ENCODE measurements at regions of chr19 and their contacts with region 1.

Region 1: DNA sequence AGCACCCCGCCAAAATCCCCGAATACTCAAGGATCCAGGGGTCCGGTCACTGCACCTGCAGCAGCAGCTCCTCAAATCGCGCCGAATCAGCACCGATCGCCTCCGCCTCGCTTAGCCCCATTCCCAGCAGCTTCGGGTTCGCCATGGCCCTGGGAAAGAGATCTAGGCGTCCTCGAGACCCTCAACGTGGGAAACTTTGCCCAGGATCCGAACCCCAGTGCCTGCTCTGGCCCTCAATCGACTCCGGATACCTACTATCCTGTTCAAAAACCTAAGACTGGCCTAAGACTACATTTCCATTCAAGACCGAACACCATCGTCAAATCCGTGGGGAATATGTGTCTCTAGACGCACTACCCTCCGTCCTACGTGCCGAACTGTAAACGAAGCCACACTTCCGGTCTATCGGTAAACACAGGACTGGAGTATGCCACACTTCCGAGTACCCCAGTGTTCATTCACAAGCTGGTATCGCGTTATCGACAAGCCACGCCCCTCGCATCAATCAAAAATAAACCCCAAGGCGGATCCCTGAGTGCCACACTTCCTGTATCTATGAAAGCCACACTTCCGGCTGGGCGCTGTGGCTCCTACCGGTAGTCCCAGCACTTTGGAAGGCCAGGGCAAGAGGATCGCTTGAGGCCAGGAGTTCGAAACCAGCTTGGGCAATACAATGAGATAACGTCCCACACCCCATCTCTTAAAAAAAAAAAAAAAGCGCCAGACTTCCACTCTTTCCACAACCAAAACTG is at the start of gene PIH1D1:
- DNase-seq: peak; percentile 98 to 99
- H3K4me3 ChIP-seq: peak within 1 kb of the TSS; percentile 73
- H3K4me3 Mint-ChIP-seq: peak within 1 kb of the TSS; percentile 98
- H3K27ac Mint-ChIP-seq: peak within 1 kb of the TSS; percentile 100
- H3K4me1 ChIP-seq: peaks cover 6% of the 10 kb centered on the region; the same call in 1 of the 2 replicates
- H3K4me1 Mint-ChIP-seq: peaks cover 10% of the 10 kb centered on the region
- H3K27me3 ChIP-seq: no peaks in the 10 kb centered on the region
- H3K27me3 Mint-ChIP-seq: no peaks in the 10 kb centered on the region
- CTCF ChIP-seq: no peak
- total RNA-seq, gene PIH1D1: 150 and 167 TPM in 2 replicates

Region 2: DNA sequence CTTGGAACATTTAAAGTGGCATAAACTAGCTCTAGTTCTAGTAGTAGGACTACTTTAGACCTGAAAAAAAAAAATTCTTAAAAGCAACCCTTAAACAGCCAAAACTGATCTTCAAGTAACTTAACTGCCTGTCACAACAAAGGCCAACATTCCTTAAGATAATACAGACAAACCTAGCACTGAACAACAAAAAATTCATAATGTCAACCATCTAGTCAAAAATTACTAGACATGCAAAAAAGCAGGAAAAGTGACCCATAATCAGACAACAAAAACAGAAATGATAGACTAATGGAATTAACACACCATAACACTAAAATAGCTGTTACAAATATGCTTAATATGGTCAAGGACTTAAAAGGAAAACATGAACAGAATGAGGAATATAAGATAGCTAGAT is 133.3 kb before region 1 on chr19:
- CTCF ChIA-PET with region 1: no interaction called
- POLR2A ChIA-PET with region 1: interaction called, 10 read pairs
- intact Hi-C with region 1: no loop called
- DNase-seq: no peak
- H3K4me3 ChIP-seq: no peak overlapping the region
- H3K4me3 Mint-ChIP-seq: no peak overlapping the region
- H3K27ac Mint-ChIP-seq: no peak overlapping the region
- H3K4me1 ChIP-seq: no peaks in the 10 kb centered on the region
- H3K4me1 Mint-ChIP-seq: no peaks in the 10 kb centered on the region
- H3K27me3 ChIP-seq: no peaks in the 10 kb centered on the region
- H3K27me3 Mint-ChIP-seq: peaks cover 7% of the 10 kb centered on the region
- CTCF ChIP-seq: no peak

Region 3: DNA sequence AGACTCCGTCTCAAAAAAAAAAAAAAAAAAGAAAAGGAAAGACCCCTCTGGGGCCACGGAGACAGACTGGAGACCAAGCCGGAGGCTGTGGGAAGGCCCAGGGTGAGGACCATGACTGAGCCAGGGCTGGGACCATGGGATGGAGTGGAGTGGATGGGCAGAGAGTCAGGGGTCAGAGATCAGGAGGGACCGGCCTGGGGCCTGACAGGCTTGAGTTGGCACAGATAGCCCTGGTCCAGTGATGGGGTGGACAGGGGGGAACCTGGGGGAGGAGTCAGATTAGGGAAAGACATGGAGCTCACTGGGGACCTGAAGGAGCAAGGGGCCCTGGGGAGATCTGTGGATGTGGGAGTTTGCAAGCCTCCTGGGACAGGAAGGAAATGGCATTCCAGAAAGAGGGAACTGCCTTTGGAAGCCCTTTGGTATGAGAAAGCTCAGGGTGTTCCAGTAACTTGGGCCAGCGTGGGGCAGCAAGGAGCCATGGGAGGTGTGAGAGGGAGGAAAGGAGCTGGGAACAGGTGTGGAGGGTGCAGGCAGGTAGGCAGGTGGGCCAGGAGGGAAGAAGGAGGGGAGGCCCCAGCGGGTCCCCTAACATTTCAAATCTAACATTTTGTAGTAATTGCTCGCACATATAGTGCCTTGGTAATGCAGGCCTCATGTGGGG is 29.5 kb after region 1 on chr19:
- CTCF ChIA-PET with region 1: interaction called, 7 read pairs
- POLR2A ChIA-PET with region 1: interaction called, 13 read pairs
- intact Hi-C with region 1: no loop called
- DNase-seq: peak in 1 of 2 experiments; percentile 44
- H3K4me3 ChIP-seq: no peak overlapping the region
- H3K4me3 Mint-ChIP-seq: no peak overlapping the region
- H3K27ac Mint-ChIP-seq: no peak overlapping the region
- H3K4me1 ChIP-seq: no peaks in the 10 kb centered on the region; the same call in 1 of the 2 replicates
- H3K4me1 Mint-ChIP-seq: peaks cover 5% of the 10 kb centered on the region
- H3K27me3 ChIP-seq: no peaks in the 10 kb centered on the region
- H3K27me3 Mint-ChIP-seq: no peaks in the 10 kb centered on the region
- CTCF ChIP-seq: no peak

Region 4: GRCh38 chr19:49487277-49488045 is 35.9 kb after region 1 on chr19 and contains the start of gene RPL13A:
- CTCF ChIA-PET with region 1: interaction called, 6 read pairs
- POLR2A ChIA-PET with region 1: interaction called, 3 read pairs
- intact Hi-C with region 1: loop called (anchors 1 kb)
- DNase-seq: peak; percentile 99 to 100
- H3K4me3 ChIP-seq: peak within 1 kb of the TSS; percentile 88
- H3K4me3 Mint-ChIP-seq: peak within 1 kb of the TSS; percentile 97
- H3K27ac Mint-ChIP-seq: peak within 1 kb of the TSS; percentile 99
- H3K4me1 ChIP-seq: peaks cover 13% of the 10 kb centered on the region; the same call in 1 of the 2 replicates
- H3K4me1 Mint-ChIP-seq: no peaks in the 10 kb centered on the region
- H3K27me3 ChIP-seq: no peaks in the 10 kb centered on the region
- H3K27me3 Mint-ChIP-seq: no peaks in the 10 kb centered on the region
- CTCF ChIP-seq: no peak
- total RNA-seq, gene RPL13A: 2,726 and 2,880 TPM in 2 replicates

Region 5: GRCh38 chr19:49497047-49497788 is 45.6 kb after region 1 on chr19:
- CTCF ChIA-PET with region 1: no interaction called
- POLR2A ChIA-PET with region 1: interaction called, 14 read pairs
- intact Hi-C with region 1: loop called (anchors 1 kb)
- DNase-seq: peak in 1 of 2 experiments; percentile 62
- H3K4me3 ChIP-seq: peak overlapping the region; percentile 93
- H3K4me3 Mint-ChIP-seq: peak overlapping the region; percentile 98
- H3K27ac Mint-ChIP-seq: peak overlapping the region; percentile 99
- H3K4me1 ChIP-seq: peaks cover 20% of the 10 kb centered on the region
- H3K4me1 Mint-ChIP-seq: peaks cover 13% of the 10 kb centered on the region
- H3K27me3 ChIP-seq: no peaks in the 10 kb centered on the region
- H3K27me3 Mint-ChIP-seq: no peaks in the 10 kb centered on the region
- CTCF ChIP-seq: no peak

Region 6: GRCh38 chr19:49546825-49547565 is 95.4 kb after region 1 on chr19:
- CTCF ChIA-PET with region 1: no interaction called
- POLR2A ChIA-PET with region 1: interaction called, 10 read pairs
- intact Hi-C with region 1: no loop called
- DNase-seq: peak; percentile 88 to 89
- H3K4me3 ChIP-seq: no peak overlapping the region
- H3K4me3 Mint-ChIP-seq: peak overlapping the region; percentile 54
- H3K27ac Mint-ChIP-seq: peak overlapping the region; percentile 44
- H3K4me1 ChIP-seq: peaks cover 3% of the 10 kb centered on the region; the same call in 1 of the 2 replicates
- H3K4me1 Mint-ChIP-seq: peaks cover 21% of the 10 kb centered on the region
- H3K27me3 ChIP-seq: no peaks in the 10 kb centered on the region
- H3K27me3 Mint-ChIP-seq: no peaks in the 10 kb centered on the region
- CTCF ChIP-seq: peak; percentile 84 to 86